Heart right ventricle (tissue), 16 donors: ENCODE measurements at regions of chr16 and their contacts with region 1.

Region 1: GRCh38 chr16:20369452-20370054 is 17.0 kb upstream of the UMOD start:
- DNase-seq: no peak
- ATAC-seq: no peak
- H3K4me3 ChIP-seq: no peak overlapping the region
- H3K27ac ChIP-seq: no peak overlapping the region
- H3K4me1 ChIP-seq: no peaks in the 10 kb centered on the region
- H3K27me3 ChIP-seq: peaks cover 0 to 39% (median 13%) of the 10 kb centered on the region in 7 donors
- CTCF ChIP-seq: no peak

Region 2: GRCh38 chr16:19728636-19728965 is 641.0 kb before region 1 on chr16:
- intact Hi-C with region 1: loop called in 1 of 10 experiments (anchors 5 kb)
- DNase-seq: no peak
- ATAC-seq: no peak
- H3K4me3 ChIP-seq: no peak overlapping the region
- H3K27ac ChIP-seq: no peak overlapping the region
- H3K4me1 ChIP-seq: peaks cover 0 to 8% (median 3%) of the 10 kb centered on the region in 9 donors
- H3K27me3 ChIP-seq: no peaks in the 10 kb centered on the region
- CTCF ChIP-seq: no peak

Region 3: GRCh38 chr16:19757762-19758595 is 611.6 kb before region 1 on chr16:
- intact Hi-C with region 1: no loop called
- DNase-seq: no peak
- ATAC-seq: no peak
- H3K4me3 ChIP-seq: peak overlapping the region in 2 of 10 donors; percentile 5 to 20
- H3K27ac ChIP-seq: peak overlapping the region in 4 of 10 donors; percentile 3 to 43 (median 15)
- H3K4me1 ChIP-seq: peaks cover 0 to 62% (median 25%) of the 10 kb centered on the region in 9 donors
- H3K27me3 ChIP-seq: no peaks in the 10 kb centered on the region
- CTCF ChIP-seq: no peak

Region 4: DNA sequence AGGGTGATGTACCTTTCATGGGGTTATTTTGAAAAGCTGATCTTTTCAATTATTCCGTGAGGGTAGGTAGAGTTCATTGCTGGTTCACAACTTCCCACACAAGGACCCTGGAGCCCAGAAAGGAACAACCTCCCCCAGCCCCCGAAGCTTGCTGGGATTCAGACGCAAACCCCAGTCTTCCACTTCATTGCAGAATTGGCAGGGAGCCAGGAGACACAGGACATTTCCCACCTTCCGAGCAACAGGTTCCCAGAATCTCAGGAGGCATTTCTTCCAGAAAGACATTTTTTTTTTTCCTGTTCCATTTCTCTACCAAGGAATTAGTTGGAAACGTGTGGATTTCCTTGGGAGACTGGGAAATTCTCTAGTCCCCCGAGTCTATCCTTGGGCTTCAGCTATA is 148.3 kb before region 1 on chr16:
- intact Hi-C with region 1: no loop called
- DNase-seq: no peak
- ATAC-seq: no peak
- H3K4me3 ChIP-seq: no peak overlapping the region
- H3K27ac ChIP-seq: no peak overlapping the region
- H3K4me1 ChIP-seq: peaks cover 0 to 4% (median 0%) of the 10 kb centered on the region in 9 donors
- H3K27me3 ChIP-seq: peaks cover 0 to 15% (median 0%) of the 10 kb centered on the region in 7 donors
- CTCF ChIP-seq: no peak

Region 5: DNA sequence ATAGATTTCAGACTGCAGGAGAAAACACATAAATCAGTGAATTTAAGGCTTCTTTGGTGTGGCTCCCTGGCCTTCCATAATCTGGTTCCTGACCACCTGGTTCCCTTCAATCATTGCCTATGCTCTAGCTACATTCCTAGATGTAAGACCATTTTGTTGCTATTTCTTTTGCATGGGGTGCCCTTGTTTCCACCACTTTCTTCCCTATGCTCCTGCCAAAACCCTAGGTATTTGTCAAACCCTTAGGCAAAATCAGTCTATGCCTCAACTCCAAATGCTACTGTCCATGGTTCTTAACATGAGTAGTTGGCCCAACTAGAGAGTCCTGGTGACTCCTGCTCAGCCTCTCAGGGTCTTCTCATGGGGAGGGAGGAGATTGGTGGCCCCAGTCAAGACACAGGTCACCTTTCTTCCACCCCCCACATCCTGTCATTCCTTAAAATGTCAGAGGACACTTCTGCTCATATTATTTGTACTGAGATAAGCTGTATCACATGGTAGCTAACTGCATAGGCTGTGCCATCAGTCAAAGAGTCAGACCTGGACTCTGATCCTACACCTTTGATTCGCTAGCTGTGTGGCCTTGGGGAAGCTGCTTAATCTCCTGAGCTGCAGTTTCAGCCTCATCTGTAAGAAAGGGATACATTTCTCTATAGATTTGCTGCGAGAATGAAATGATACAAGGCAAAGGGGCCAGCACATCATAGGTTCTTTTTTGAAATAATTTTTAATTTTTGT is 54.7 kb after region 1 on chr16:
- intact Hi-C with region 1: no loop called
- DNase-seq: no peak
- ATAC-seq: no peak
- H3K4me3 ChIP-seq: no peak overlapping the region
- H3K27ac ChIP-seq: no peak overlapping the region
- H3K4me1 ChIP-seq: no peaks in the 10 kb centered on the region
- H3K27me3 ChIP-seq: no peaks in the 10 kb centered on the region
- CTCF ChIP-seq: no peak